Posterior vena cava (tissue), 2 donors: ENCODE measurements at regions of chr6 and their contacts with region 1.

Region 1: GRCh38 chr6:151252634-151253033 is 12.9 kb downstream of the AKAP12 start:
- DNase-seq: no peak

Region 2: DNA sequence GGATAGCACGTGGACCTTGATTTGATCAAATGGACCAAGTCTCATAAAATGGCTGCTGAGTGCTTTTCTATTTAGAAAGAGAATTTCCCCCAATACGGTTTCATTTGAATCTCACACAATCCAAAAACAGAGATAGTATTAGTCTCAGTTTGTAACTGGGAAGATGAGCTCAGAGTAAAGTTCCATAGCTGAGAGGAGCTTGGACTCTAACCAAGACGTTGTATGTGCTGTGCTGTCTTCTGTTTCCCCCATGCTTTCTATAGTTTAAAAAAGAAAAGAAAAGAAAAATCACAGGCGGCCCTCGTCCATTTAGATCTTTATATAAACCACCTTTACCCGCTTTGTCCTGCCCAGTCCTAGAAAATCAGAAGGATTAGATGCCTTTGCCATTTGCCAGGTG is 45.3 kb after region 1 on chr6:
- intact Hi-C with region 1: loop called in 1 of 2 experiments (anchors 1 kb)
- DNase-seq: no peak